Posterior vena cava (tissue), 2 donors: ENCODE measurements at regions of chr1 and their contacts with region 1.

Region 1: GRCh38 chr1:87335175-87335884 is 6.7 kb downstream of the LMO4 start:
- DNase-seq: peak; percentile 94

Region 2: GRCh38 chr1:87953732-87954344 is 618.5 kb after region 1 on chr1:
- intact Hi-C with region 1: loop called (anchors 10 kb)
- DNase-seq: peak; percentile 80